Activated naive CD4-positive, alpha-beta T cell treated with anti-CD3 and anti-CD28 coated beads for 36 hours (primary cell): ENCODE measurements at regions of chr7 and their contacts with region 1.

Region 1: DNA sequence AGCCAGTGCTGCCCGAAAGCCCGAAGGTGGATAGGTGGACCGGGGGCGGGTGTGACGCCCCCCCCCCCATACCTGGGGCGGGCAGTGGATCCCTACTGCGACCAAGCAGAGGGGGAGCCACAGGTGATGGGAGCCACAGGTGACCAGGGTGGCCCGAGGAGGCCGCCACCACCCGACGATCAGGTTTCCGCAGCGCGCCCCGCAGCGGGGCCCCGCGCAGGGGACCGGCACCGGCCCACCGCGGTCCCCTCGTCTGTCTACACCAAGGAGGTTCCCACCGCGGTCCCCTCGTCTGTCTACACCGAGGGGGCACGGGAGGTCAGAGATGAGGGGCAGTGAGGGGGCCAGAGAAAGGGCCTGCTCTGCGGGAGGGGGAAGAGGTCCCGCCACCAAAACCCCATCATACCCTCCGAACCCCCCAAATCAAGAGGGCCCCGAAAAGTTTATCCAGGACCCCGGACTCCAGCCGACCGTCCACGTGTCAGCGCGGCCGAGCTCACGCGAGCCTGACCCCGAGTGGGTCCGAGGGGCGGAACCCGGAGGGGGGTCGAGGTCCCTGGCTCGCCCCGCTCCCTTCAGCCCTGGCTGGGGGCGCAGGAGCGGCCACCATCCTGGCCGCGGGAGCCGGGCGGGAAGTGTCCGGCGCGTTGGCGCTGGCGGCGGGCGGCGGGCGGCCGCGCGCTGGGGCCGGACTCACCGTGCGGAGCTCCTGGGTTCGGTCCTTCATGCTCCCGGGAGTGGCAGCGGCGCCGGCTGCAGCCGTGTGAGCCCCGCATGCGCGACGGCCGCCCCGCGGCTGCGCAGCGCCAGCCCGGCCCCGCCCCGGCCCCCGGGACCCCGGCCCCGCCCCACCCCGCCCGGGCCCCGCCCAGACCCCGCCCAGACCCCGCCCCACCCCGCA is at the start of gene STX1A:
- DNase-seq: peak; percentile 69
- H3K4me3 Mint-ChIP-seq: peak within 1 kb of the TSS; percentile 77
- H3K27ac Mint-ChIP-seq: no peak within 1 kb of the TSS
- H3K4me1 Mint-ChIP-seq: peaks cover 33% of the 10 kb centered on the region
- H3K27me3 Mint-ChIP-seq: peaks cover 2% of the 10 kb centered on the region
- total RNA-seq, gene STX1A: 23.7 to 24.1 TPM

Region 2: GRCh38 chr7:73351447-73352167 is 367.5 kb before region 1 on chr7:
- CTCF ChIA-PET with region 1: no interaction called
- intact Hi-C with region 1: no loop called
- DNase-seq: no peak
- H3K4me3 Mint-ChIP-seq: no peak overlapping the region
- H3K27ac Mint-ChIP-seq: no peak overlapping the region
- H3K4me1 Mint-ChIP-seq: no peaks in the 10 kb centered on the region
- H3K27me3 Mint-ChIP-seq: no peaks in the 10 kb centered on the region

Region 3: DNA sequence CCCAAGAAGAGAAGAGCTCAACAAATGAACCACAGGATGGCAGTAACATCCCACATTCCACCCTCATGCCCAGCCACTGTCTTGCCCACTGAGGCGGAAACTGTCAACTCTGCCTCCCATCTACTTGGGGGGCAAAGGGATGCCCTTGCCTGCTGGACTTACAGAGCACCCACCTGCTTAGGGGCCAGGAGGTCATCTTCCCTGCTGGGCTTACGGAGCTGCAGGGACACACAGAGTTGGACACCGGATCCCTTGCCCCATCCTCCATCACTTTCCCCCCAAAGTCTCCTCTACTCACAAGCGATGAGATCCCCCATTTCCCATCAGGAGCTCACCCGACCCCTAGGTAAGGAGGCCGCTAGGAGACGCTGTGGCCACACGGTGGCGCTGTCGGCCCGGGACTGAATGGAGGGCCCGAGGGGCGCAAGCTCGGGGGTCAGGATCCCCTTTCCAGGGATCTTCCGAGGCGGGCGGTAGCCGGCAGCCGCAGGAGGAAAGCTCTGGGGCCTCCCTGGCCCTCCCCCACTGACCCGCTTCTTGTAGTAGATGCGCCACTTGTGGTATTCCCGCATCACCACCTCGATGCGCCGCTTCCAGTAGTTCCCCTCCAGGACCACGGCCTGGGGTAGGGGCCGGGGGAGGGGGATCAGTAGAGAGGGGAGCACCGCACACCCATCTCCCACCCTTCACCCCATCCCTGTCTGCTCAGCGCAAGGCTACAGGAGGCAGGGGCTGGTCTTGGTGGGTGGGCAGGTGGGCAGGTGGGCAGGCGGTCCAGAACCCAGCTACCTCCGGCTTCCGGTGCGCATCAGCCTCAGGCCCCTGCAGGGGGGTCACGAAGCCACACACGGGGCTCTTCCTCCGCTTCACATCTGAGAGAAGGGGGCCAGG is 112.1 kb before region 1 on chr7:
- CTCF ChIA-PET with region 1: interaction called, 51 read pairs
- intact Hi-C with region 1: no loop called
- DNase-seq: peak; percentile 63
- H3K4me3 Mint-ChIP-seq: no peak overlapping the region
- H3K27ac Mint-ChIP-seq: no peak overlapping the region
- H3K4me1 Mint-ChIP-seq: no peaks in the 10 kb centered on the region
- H3K27me3 Mint-ChIP-seq: peaks cover 6% of the 10 kb centered on the region

Region 4: GRCh38 chr7:73638911-73639310 is 80.2 kb before region 1 on chr7:
- CTCF ChIA-PET with region 1: no interaction called
- intact Hi-C with region 1: no loop called
- DNase-seq: no peak
- H3K4me3 Mint-ChIP-seq: no peak overlapping the region
- H3K27ac Mint-ChIP-seq: no peak overlapping the region
- H3K4me1 Mint-ChIP-seq: peaks cover 2% of the 10 kb centered on the region
- H3K27me3 Mint-ChIP-seq: peaks cover 19% of the 10 kb centered on the region

Region 5: GRCh38 chr7:73667344-73668102 is 51.6 kb before region 1 on chr7 and contains the start of gene VPS37D:
- CTCF ChIA-PET with region 1: interaction called, 3 read pairs
- intact Hi-C with region 1: loop called (anchors 2 kb)
- DNase-seq: peak; percentile 91
- H3K4me3 Mint-ChIP-seq: peak within 1 kb of the TSS; percentile 63
- H3K27ac Mint-ChIP-seq: no peak within 1 kb of the TSS
- H3K4me1 Mint-ChIP-seq: peaks cover 8% of the 10 kb centered on the region
- H3K27me3 Mint-ChIP-seq: peaks cover 34% of the 10 kb centered on the region
- total RNA-seq, gene VPS37D: not detected

Region 6: DNA sequence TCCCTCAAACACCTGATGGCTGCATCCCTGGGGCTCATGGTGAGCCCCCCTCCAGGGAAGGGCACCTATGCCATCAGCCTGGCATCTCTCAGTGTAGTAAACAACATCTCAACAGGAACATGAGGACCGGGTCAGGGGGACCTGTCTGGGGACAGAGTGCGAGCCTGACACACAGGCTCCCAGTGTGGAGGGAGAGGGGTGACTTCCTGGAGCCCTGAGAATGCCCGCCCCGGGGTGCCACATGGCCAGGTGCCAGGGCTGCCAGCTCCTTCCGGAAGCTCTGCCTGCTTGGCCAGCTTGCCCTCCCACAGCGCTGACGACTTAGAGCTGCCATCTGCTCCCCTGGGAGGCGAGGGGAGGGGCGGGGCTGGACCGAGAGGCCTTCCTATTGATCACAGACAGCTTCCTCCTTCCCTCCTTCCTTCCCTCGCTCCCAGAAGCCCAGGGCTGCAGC is 12.0 kb before region 1 on chr7:
- CTCF ChIA-PET with region 1: interaction called, 5 read pairs
- intact Hi-C with region 1: loop called (anchors 1 kb)
- DNase-seq: peak; percentile 28
- H3K4me3 Mint-ChIP-seq: no peak overlapping the region
- H3K27ac Mint-ChIP-seq: no peak overlapping the region
- H3K4me1 Mint-ChIP-seq: peaks cover 22% of the 10 kb centered on the region
- H3K27me3 Mint-ChIP-seq: no peaks in the 10 kb centered on the region

Region 7: DNA sequence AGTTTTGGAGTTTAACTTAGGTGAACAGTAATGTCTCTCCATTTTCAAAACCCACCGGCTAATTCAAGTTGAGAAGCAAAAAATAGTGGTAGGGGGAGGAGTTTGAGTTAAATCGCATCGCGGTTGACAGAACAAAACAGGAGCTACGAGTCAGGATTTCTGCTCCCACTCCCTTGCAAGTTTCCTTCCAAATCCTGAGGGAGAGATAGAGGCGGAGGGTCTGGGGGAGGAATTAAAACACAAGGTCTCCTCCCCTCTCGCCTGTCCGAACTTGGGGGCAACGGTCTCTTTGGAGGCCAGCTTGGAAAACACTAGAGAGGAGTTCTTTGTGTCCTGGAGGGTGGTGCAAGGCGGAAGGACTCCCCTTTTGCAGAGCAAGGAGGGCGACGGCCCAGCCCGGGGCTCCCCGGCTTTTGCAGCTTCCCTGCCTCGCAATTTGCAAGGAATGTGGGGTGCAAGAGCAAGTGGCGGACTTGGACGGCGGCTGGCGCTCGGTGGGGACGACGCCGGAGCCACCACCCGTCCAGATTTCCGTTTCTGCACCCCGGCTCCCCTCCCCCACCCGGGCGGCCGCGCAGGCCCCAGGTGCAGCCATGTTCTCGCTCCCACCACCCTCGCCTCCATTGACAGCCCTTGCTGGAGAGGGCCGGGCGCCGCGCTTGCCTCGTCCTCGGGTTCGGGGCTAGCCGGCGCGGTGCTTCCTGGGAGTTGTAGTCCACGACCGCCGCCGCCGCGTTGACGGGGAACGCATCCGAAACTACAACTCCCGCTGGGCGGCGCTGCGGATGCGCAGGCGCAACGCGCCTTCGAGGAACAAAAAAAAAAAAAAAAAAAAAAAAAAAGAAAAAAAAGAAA is 937.9 kb after region 1 on chr7:
- CTCF ChIA-PET with region 1: no interaction called
- intact Hi-C with region 1: loop called (anchors 10 kb)
- DNase-seq: peak; percentile 98
- H3K4me3 Mint-ChIP-seq: peak overlapping the region; percentile 85
- H3K27ac Mint-ChIP-seq: peak overlapping the region; percentile 82
- H3K4me1 Mint-ChIP-seq: peaks cover 49% of the 10 kb centered on the region
- H3K27me3 Mint-ChIP-seq: peaks cover 1% of the 10 kb centered on the region